Posterior vena cava (tissue), 2 donors: ENCODE measurements at regions of chr1 and their contacts with region 1.

Region 1: GRCh38 chr1:150176593-150176992 is 26.9 kb downstream of the PLEKHO1 start:
- DNase-seq: no peak

Region 2: GRCh38 chr1:150083907-150084306 is 92.7 kb before region 1 on chr1:
- intact Hi-C with region 1: loop called in 1 of 2 experiments (anchors 5 kb)
- DNase-seq: no peak

Region 3: GRCh38 chr1:150186789-150187559 is 10.4 kb after region 1 on chr1:
- intact Hi-C with region 1: no loop called
- DNase-seq: no peak